Ascending aorta (tissue), 2 donors: ENCODE measurements at regions of chr15 and their contacts with region 1.

Region 1: GRCh38 chr15:55494931-55495330 is 13.1 kb downstream of the DNAAF4 start:
- DNase-seq: no peak
- H3K4me3 ChIP-seq: no peak overlapping the region
- H3K27ac ChIP-seq: no peak overlapping the region
- H3K4me1 ChIP-seq: peaks cover 0 to 4% of the 10 kb centered on the region in 2 donors
- H3K27me3 ChIP-seq: no peaks in the 10 kb centered on the region
- CTCF ChIP-seq: no peak

Region 2: DNA sequence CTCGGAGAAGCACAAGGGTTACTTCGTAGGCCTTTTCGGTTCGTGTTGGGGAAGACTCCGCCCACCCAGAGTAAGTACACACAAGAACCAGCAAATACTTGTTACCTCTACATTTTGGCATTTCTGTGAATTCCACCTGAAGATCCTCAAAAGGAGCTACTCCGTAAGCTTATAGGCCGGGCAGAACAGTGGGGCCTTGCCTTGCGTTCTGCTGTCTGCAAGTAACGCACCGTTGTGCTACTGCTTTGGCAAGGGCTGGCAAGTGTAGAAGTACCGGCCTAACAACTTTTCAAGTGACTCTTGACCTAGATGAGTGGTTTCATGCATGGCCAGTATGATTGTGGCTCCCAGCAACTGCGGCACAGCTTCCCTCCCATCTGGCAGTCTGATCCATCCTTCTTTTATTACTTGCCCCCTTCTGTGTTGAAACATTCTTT is 19.5 kb after region 1 on chr15:
- intact Hi-C with region 1: no loop called
- DNase-seq: no peak
- H3K4me3 ChIP-seq: no peak overlapping the region
- H3K27ac ChIP-seq: no peak overlapping the region
- H3K4me1 ChIP-seq: no peaks in the 10 kb centered on the region
- H3K27me3 ChIP-seq: no peaks in the 10 kb centered on the region
- CTCF ChIP-seq: no peak

Region 3: GRCh38 chr15:55630858-55631257 is 135.9 kb after region 1 on chr15:
- intact Hi-C with region 1: loop called (anchors 10 kb)
- DNase-seq: no peak
- H3K4me3 ChIP-seq: no peak overlapping the region
- H3K27ac ChIP-seq: no peak overlapping the region
- H3K4me1 ChIP-seq: no peaks in the 10 kb centered on the region
- H3K27me3 ChIP-seq: no peaks in the 10 kb centered on the region
- CTCF ChIP-seq: no peak